GM18951 (cell line): ENCODE measurements at regions of chr6 and their contacts with region 1.

Region 1: GRCh38 chr6:137866914-137867684 is at the start of gene TNFAIP3:
- POLR2A ChIP-seq: peak; percentile 96

Region 2: GRCh38 chr6:136927292-136927691 is 939.8 kb before region 1 on chr6:
- in situ Hi-C with region 1: no loop called
- POLR2A ChIP-seq: no peak

Region 3: DNA sequence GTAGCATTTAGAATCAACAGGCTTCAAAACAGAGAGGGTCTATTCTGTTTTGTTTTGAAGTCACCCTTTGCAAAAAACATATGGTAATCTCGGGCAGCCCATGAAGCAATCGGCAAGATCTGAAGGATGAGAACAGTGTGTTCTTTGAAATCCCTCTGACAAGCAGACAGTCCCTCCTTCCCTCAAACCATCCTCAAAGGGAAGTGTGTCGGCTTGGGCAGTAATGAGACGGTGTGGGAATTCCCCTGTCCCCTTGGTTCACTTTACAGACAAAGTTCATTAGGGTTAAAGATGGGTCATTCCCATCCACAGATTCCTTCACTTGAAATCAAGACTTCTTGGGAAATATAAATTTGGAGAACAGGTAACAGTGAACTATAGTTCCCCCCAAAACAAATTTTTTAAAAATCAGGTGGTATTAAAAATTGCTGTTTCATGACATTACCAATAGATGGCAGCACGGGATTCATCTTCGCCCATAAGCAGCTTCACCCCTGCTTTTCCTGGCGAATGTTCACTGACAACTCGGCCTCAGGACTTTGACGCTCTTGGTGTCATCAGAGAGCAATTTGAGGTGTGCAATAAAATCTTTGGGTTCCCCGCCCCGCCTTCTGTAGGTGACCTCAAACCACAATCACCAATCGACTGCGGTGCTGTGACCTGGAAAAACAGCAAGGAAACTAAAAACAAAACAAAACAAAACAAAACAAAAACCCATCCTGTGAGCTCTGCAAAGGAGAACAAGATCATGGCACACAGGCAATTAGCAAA is 159.3 kb before region 1 on chr6:
- in situ Hi-C with region 1: loop called (anchors 5 kb)
- POLR2A ChIP-seq: no peak